IMR-90 (cell line): ENCODE measurements at regions of chr13 and their contacts with region 1.

Region 1: GRCh38 chr13:106373989-106374572 is 161.4 kb downstream of the EFNB2 start:
- DNase-seq: peak; percentile 73
- ATAC-seq: peak; percentile 55; the same call in 1 of the 2 replicates
- H3K4me3 ChIP-seq: no peak overlapping the region
- H3K27ac ChIP-seq: 0 out of 2 replicates have a peak overlapping the region, but pooled peaks have one; percentile 3
- H3K4me1 ChIP-seq: peaks cover 29% of the 10 kb centered on the region
- H3K27me3 ChIP-seq: no peaks in the 10 kb centered on the region
- CTCF ChIP-seq: no peak
- POLR2A ChIP-seq: no peak
- RAD21 ChIP-seq: no peak

Region 2: GRCh38 chr13:105035092-105035491 is 1339.0 kb before region 1 on chr13:
- CTCF ChIA-PET with region 1: no interaction called
- POLR2A ChIA-PET with region 1: interaction called, 11 read pairs
- dilution Hi-C with region 1: no loop called
- in situ Hi-C with region 1: no loop called
- intact Hi-C with region 1: no loop called
- DNase-seq: no peak
- ATAC-seq: no peak
- H3K4me3 ChIP-seq: no peak overlapping the region
- H3K27ac ChIP-seq: no peak overlapping the region
- H3K4me1 ChIP-seq: no peaks in the 10 kb centered on the region
- H3K27me3 ChIP-seq: no peaks in the 10 kb centered on the region
- CTCF ChIP-seq: no peak
- POLR2A ChIP-seq: no peak
- RAD21 ChIP-seq: no peak

Region 3: DNA sequence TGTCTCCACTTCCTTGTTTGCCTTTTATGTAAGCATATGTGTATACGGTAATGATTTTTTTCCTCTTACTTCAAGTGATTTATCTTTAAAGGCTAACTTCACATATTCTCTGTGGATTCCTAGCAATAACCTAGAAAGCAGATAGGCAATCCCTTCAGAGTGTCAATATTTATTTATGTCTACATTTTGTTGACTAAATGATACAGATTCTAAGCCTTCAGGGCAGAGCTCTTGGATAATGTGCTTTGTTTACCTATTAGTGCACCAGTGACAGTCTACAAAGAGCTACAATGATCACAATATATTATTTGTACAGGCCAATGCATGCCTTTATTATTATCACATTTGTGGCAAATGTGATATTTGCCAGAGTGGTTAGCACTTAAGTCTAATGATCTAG is 244.8 kb before region 1 on chr13:
- CTCF ChIA-PET with region 1: no interaction called
- POLR2A ChIA-PET with region 1: no interaction called
- dilution Hi-C with region 1: no loop called
- in situ Hi-C with region 1: no loop called
- intact Hi-C with region 1: no loop called
- DNase-seq: no peak
- ATAC-seq: no peak
- H3K4me3 ChIP-seq: no peak overlapping the region
- H3K27ac ChIP-seq: no peak overlapping the region
- H3K4me1 ChIP-seq: peaks cover 9% of the 10 kb centered on the region
- H3K27me3 ChIP-seq: no peaks in the 10 kb centered on the region
- CTCF ChIP-seq: no peak
- POLR2A ChIP-seq: no peak
- RAD21 ChIP-seq: no peak